CD8-positive, alpha-beta T cell (primary cell): ENCODE measurements at regions of chr3 and their contacts with region 1.

Region 1: GRCh38 chr3:56494686-56495322 is 26.5 kb upstream of the ERC2 start:
- DNase-seq: peak; percentile 47 to 86 (median 72)
- ATAC-seq: peak; percentile 100
- H3K4me3 ChIP-seq: no peak overlapping the region
- H3K4me3 Mint-ChIP-seq: no peak overlapping the region
- H3K27ac ChIP-seq: no peak overlapping the region
- H3K27ac Mint-ChIP-seq: no peak overlapping the region
- H3K4me1 ChIP-seq: no peaks in the 10 kb centered on the region
- H3K4me1 Mint-ChIP-seq: no peaks in the 10 kb centered on the region
- H3K27me3 ChIP-seq: peaks cover 0 to 4% of the 10 kb centered on the region in 2 experiments
- H3K27me3 Mint-ChIP-seq: peaks cover 30% of the 10 kb centered on the region
- CTCF ChIP-seq: peak; percentile 95

Region 2: DNA sequence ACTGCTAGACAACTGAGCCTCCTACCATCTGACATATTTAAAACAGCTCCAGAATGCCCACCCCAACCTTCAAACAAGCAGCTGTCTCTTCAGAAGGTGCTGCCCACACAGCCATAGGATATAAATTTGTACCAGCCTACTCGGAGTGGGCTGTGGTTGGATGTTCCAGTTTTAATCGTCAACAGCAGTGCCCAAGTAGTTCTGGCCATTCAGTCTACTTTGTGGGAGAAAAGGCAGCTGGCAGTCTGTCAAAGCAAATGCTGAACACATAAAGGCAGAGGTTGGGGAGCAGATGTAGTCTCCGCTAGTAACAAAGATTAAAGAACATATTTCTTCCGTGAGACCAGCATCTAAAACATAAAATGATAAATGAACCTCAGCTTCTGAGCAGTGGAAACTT is 10.7 kb before region 1 on chr3:
- CTCF ChIA-PET with region 1: interaction called, 10 read pairs
- POLR2A ChIA-PET with region 1: no interaction called
- intact Hi-C with region 1: no loop called
- DNase-seq: no peak
- ATAC-seq: no peak
- H3K4me3 ChIP-seq: no peak overlapping the region
- H3K4me3 Mint-ChIP-seq: no peak overlapping the region
- H3K27ac ChIP-seq: no peak overlapping the region
- H3K27ac Mint-ChIP-seq: no peak overlapping the region
- H3K4me1 ChIP-seq: no peaks in the 10 kb centered on the region
- H3K4me1 Mint-ChIP-seq: no peaks in the 10 kb centered on the region
- H3K27me3 ChIP-seq: peaks cover 0 to 5% of the 10 kb centered on the region in 2 experiments
- H3K27me3 Mint-ChIP-seq: peaks cover 37% of the 10 kb centered on the region
- CTCF ChIP-seq: no peak